AG04450 (cell line): ENCODE measurements at regions of chr18 and their contacts with region 1.

Region 1: GRCh38 chr18:77207540-77207939 is 42.1 kb upstream of the GALR1 start:
- DNase-seq: peak; percentile 27
- H3K4me3 ChIP-seq: no peak overlapping the region
- H3K27ac ChIP-seq: peak overlapping the region; percentile 11
- H3K27me3 ChIP-seq: no peaks in the 10 kb centered on the region
- CTCF ChIP-seq: peak; percentile 71

Region 2: DNA sequence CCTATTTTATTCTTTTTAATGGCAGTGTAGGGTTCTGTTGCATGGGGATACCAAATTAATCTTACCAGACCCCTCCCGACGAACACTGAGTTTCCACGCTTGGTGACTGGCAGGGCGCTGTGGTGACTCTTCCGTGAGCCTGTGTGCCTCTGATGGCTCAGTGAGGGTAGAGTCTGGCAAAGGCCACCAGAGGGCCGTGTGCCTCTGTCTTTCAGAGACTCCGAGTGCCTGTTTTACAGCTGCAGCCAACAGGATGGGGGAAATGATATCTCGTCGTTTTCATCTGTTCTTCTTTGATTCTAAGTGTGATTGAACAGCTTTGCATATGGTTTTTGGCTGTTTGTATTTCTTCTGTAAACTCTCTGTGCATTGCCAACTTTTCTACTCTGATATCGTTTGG is 285.4 kb before region 1 on chr18:
- CTCF ChIA-PET with region 1: interaction called, 13 read pairs
- POLR2A ChIA-PET with region 1: no interaction called
- DNase-seq: peak; percentile 10
- H3K4me3 ChIP-seq: no peak overlapping the region
- H3K27ac ChIP-seq: no peak overlapping the region
- H3K27me3 ChIP-seq: no peaks in the 10 kb centered on the region
- CTCF ChIP-seq: peak; percentile 72

Region 3: GRCh38 chr18:77061946-77062517 is 145.5 kb before region 1 on chr18:
- CTCF ChIA-PET with region 1: interaction called, 15 read pairs
- POLR2A ChIA-PET with region 1: no interaction called
- DNase-seq: no peak
- H3K4me3 ChIP-seq: no peak overlapping the region
- H3K27ac ChIP-seq: peak overlapping the region; percentile 53
- H3K27me3 ChIP-seq: no peaks in the 10 kb centered on the region
- CTCF ChIP-seq: no peak

Region 4: DNA sequence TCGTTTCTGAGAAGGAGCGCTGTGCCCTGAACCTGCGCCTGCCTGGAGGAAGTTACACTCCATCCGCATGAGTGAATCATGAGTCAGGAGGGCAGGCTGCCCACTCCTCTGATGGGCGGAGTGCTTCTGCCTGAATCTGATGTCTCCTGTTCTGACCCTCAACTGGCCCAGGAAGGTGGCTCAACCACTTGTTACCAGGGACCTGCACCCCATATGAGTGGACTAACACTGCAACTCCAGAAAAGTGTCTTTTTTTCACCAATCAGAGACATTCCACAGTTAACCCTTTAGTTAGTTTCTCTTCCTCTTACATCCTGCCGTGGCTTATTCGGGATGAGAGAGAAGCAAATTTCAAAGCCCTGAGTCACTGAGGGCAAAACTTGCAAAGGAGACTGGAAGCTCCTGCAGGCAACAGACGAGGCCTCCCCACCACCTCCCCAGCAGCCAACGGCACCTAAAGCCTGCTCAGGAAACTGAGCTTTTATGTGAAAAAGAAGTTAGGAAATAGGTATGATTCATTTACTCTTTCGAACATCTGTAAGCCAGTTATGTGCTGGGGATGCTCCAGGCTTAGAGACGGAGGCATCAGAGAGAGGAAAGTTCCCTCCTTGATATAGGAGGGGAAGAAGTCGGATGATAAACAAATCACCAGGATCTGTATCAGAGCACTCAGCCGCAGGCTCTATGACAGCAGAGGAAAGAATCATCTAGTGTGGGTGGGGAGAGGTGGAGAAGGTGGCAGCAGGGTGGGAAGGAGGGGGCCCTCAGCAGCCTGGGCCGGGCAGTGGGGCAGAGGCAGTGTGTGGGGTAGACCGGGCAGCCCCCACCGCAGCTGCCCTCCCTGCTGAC is 105.9 kb before region 1 on chr18:
- CTCF ChIA-PET with region 1: interaction called, 8 read pairs
- POLR2A ChIA-PET with region 1: interaction called, 12 read pairs
- DNase-seq: peak; percentile 89
- H3K4me3 ChIP-seq: peak overlapping the region; percentile 44
- H3K27ac ChIP-seq: peak overlapping the region; percentile 99
- H3K27me3 ChIP-seq: no peaks in the 10 kb centered on the region
- CTCF ChIP-seq: no peak

Region 5: GRCh38 chr18:77223653-77224052 is 16.1 kb after region 1 on chr18:
- CTCF ChIA-PET with region 1: interaction called, 16 read pairs
- POLR2A ChIA-PET with region 1: no interaction called
- DNase-seq: peak; percentile 8
- H3K4me3 ChIP-seq: no peak overlapping the region
- H3K27ac ChIP-seq: no peak overlapping the region
- H3K27me3 ChIP-seq: no peaks in the 10 kb centered on the region
- CTCF ChIP-seq: no peak